Esophagus muscularis mucosa (tissue), 4 donors: ENCODE measurements at regions of chrX and their contacts with region 1.

Region 1: GRCh38 chrX:17374619-17375366 is at the start of gene NHS:
- DNase-seq: peak; percentile 92
- H3K4me3 ChIP-seq: peak within 1 kb of the TSS; percentile 62 to 70 (median 64)
- H3K27ac ChIP-seq: peak within 1 kb of the TSS; percentile 75 to 81 (median 80)
- H3K4me1 ChIP-seq: peaks cover 0 to 15% (median 6%) of the 10 kb centered on the region in 4 donors
- H3K27me3 ChIP-seq: no peaks in the 10 kb centered on the region
- CTCF ChIP-seq: peak; percentile 43 to 78 (median 61)
- EP300 ChIP-seq: no peak
- POLR2A ChIP-seq: no peak
- total RNA-seq, gene NHS: 5.0 to 8.7 (median 6.2) TPM

Region 2: GRCh38 chrX:17242470-17242869 is 132.3 kb before region 1 on chrX:
- intact Hi-C with region 1: loop called (anchors 5 kb)
- DNase-seq: no peak
- H3K4me3 ChIP-seq: no peak overlapping the region
- H3K27ac ChIP-seq: no peak overlapping the region
- H3K4me1 ChIP-seq: no peaks in the 10 kb centered on the region
- H3K27me3 ChIP-seq: no peaks in the 10 kb centered on the region
- CTCF ChIP-seq: peak; percentile 69 to 75 (median 74)
- EP300 ChIP-seq: no peak
- POLR2A ChIP-seq: no peak

Region 3: DNA sequence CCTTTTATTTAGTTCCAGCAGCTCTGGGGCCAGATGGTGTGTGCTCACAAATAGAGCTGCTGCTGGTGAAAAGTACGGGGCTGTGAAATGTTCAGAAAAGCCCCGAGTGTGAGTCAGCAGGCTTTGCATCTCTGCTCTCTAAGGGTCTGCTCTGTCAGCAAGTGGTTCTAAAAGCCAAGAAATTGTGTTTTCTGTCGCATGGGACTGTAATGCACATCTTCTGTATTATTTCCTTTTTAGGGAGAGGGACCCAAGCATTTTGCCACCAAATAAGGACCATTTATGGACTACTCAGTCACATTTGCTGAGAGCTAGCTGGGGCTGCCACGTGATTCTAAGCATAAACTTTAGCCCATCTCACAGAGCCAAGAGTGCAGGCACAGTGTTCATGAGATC is 82.7 kb before region 1 on chrX:
- intact Hi-C with region 1: loop called (anchors 10 kb)
- DNase-seq: no peak
- H3K4me3 ChIP-seq: no peak overlapping the region
- H3K27ac ChIP-seq: peak overlapping the region; percentile 60 to 78 (median 74)
- H3K4me1 ChIP-seq: peaks cover 0 to 23% (median 18%) of the 10 kb centered on the region in 4 donors
- H3K27me3 ChIP-seq: no peaks in the 10 kb centered on the region
- CTCF ChIP-seq: no peak
- EP300 ChIP-seq: no peak
- POLR2A ChIP-seq: no peak

Region 4: DNA sequence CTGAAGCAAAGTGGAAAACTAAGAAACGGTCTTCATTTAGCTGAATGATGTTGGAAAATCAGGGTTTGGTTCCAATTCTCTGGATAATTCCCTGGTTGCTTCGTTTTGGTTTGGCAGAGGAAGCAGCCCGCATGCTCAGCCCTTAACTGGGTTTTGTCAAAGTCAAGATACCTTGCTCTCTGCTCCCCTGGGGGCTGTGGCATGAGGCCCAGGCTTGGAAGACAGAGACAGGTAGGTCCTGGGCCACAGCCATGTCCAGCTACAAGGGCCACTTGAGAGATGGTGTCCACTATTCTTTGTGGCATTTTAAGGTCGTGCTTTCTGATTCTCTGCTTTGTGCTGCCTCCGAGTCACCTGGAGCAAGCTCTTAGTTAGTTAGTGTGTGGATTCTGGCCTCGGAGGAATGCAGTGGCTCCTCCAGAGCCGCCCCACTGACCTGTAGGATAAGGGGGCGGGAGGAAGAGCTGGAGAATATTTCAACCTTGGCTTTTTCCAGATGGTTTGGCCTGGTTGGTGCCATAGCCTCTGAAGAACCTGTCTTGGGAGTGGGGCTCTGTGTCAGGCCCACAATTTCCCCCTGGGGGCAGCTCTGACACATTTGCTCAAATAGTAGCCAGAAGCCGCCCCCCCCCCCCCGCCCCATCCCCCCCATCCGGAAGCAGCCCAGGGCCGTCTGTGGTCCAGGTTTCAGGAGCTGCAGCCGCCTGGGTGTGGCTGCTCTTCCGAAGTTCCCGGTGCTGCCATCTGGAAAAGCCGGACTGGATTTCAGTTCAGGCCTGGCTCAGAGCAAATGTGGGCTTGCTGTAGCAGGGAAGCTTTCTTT is 147.3 kb after region 1 on chrX:
- intact Hi-C with region 1: loop called (anchors 10 kb)
- DNase-seq: no peak
- H3K4me3 ChIP-seq: no peak overlapping the region
- H3K27ac ChIP-seq: no peak overlapping the region
- H3K4me1 ChIP-seq: peaks cover under 1 to 24% (median 12%) of the 10 kb centered on the region in 4 donors
- H3K27me3 ChIP-seq: peaks cover 0 to 3% (median 0%) of the 10 kb centered on the region in 4 donors
- CTCF ChIP-seq: no peak
- EP300 ChIP-seq: no peak
- POLR2A ChIP-seq: no peak

Region 5: GRCh38 chrX:17580539-17581152 is 205.9 kb after region 1 on chrX:
- intact Hi-C with region 1: loop called (anchors 10 kb)
- DNase-seq: no peak
- H3K4me3 ChIP-seq: no peak overlapping the region
- H3K27ac ChIP-seq: peak overlapping the region; percentile 20 to 67 (median 44)
- H3K4me1 ChIP-seq: peaks cover 0 to 42% (median 23%) of the 10 kb centered on the region in 4 donors
- H3K27me3 ChIP-seq: peaks cover 0 to 6% (median 0%) of the 10 kb centered on the region in 4 donors
- CTCF ChIP-seq: no peak
- EP300 ChIP-seq: no peak
- POLR2A ChIP-seq: no peak

Region 6: GRCh38 chrX:17689971-17690409 is 315.2 kb after region 1 on chrX:
- intact Hi-C with region 1: loop called (anchors 10 kb)
- DNase-seq: no peak
- H3K4me3 ChIP-seq: no peak overlapping the region
- H3K27ac ChIP-seq: no peak overlapping the region
- H3K4me1 ChIP-seq: peaks cover 0 to 4% (median 2%) of the 10 kb centered on the region in 4 donors
- H3K27me3 ChIP-seq: no peaks in the 10 kb centered on the region
- CTCF ChIP-seq: peak; percentile 67 to 70 (median 68)
- EP300 ChIP-seq: no peak
- POLR2A ChIP-seq: no peak